AG04449 (cell line): ENCODE measurements at regions of chr7 and their contacts with region 1.

Region 1: GRCh38 chr7:92447345-92448204 is at the start of gene GATAD1:
- DNase-seq: no peak
- H3K4me3 ChIP-seq: peak within 1 kb of the TSS; percentile 91
- CTCF ChIP-seq: peak; percentile 86

Region 2: GRCh38 chr7:91835846-91836368 is 611.7 kb before region 1 on chr7:
- CTCF ChIA-PET with region 1: interaction called, 42 read pairs
- POLR2A ChIA-PET with region 1: no interaction called
- DNase-seq: no peak
- H3K4me3 ChIP-seq: no peak overlapping the region
- CTCF ChIP-seq: no peak

Region 3: DNA sequence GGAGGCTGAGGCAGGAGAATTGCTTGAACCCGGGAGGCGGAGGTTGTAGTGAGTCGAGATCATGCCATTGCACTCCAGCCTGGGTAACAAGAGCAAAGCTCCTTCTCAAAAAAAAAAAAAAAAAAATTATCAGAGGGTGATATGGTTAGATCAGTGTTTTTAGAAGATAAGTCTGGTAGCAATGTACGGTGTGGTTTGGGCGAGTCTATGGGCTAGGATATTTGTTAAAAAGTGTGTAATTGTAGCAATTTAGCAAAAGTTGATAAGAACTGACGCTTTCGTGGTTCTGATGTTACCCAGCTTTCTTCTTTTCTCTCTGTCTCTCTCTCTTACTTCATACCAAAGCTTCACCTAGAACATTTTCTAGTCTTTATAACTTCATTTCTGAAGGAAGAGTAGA is 306.4 kb before region 1 on chr7:
- CTCF ChIA-PET with region 1: no interaction called
- POLR2A ChIA-PET with region 1: no interaction called
- DNase-seq: no peak
- H3K4me3 ChIP-seq: no peak overlapping the region
- CTCF ChIP-seq: no peak

Region 4: GRCh38 chr7:92178927-92179924 is 268.3 kb before region 1 on chr7 and contains the start of gene LRRD1:
- CTCF ChIA-PET with region 1: interaction called, 25 read pairs
- POLR2A ChIA-PET with region 1: interaction called, 3 read pairs
- DNase-seq: peak; percentile 5
- H3K4me3 ChIP-seq: peak within 1 kb of the TSS; percentile 55
- CTCF ChIP-seq: peak; percentile 98

Region 5: DNA sequence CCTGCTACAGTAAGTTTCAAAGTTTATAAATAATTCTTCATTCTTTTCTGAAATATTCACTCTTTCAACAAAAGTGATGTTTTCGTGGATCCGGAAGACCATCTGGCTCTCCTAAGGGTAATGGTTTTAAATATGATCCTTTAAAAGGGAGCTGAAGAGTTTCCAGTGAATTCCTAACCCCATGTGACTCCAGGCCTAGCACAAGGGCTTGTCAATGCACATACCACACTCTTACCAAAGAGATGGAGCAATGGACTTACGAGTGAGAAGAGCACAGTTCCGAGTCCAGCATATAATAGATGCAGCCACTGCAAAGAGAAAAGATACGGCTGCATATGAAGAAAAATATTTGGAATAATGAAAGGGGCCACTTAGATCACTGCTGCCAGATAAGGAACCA is 32.4 kb before region 1 on chr7:
- CTCF ChIA-PET with region 1: interaction called, 10 read pairs
- POLR2A ChIA-PET with region 1: no interaction called
- DNase-seq: peak; percentile 2
- H3K4me3 ChIP-seq: no peak overlapping the region
- CTCF ChIP-seq: no peak

Region 6: GRCh38 chr7:92436612-92437445 is 10.7 kb before region 1 on chr7:
- CTCF ChIA-PET with region 1: interaction called, 14 read pairs
- POLR2A ChIA-PET with region 1: no interaction called
- DNase-seq: no peak
- H3K4me3 ChIP-seq: no peak overlapping the region
- CTCF ChIP-seq: no peak